IMR-90 (cell line): ENCODE measurements at regions of chr2 and their contacts with region 1.

Region 1: DNA sequence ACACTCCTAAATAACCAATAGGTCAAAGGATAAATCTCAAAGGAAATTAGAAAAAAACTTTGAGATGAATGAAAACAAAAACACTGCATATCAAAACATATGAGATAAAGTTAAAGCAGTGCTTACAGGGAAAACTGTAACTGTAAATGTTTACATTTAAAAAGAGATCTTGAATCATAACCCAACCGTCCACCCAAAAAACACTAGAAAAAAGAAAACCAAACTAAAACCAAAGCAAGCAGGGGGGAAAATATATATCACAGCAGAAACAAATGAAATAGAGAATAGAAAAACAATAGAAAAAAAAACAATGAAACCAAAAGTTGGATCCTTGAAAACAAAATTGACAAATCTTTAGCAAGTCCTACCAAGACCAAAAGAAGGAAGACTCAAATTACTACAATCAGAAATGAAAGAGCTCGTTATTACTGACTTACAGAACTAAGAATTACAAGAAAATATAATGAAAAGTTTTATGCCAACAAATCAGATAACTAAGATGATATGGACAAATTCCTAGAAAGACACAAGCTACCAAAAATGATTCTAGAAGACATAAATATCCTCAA is 65.6 kb downstream of the TLK1 start:
- DNase-seq: no peak
- ATAC-seq: peak; percentile 44; the same call in 1 of the 2 replicates
- H3K4me3 ChIP-seq: no peak overlapping the region
- H3K27ac ChIP-seq: no peak overlapping the region
- H3K4me1 ChIP-seq: no peaks in the 10 kb centered on the region
- H3K27me3 ChIP-seq: no peaks in the 10 kb centered on the region
- CTCF ChIP-seq: no peak
- POLR2A ChIP-seq: no peak
- RAD21 ChIP-seq: no peak

Region 2: GRCh38 chr2:171134624-171135230 is 39.6 kb after region 1 on chr2:
- CTCF ChIA-PET with region 1: no interaction called
- POLR2A ChIA-PET with region 1: no interaction called
- dilution Hi-C with region 1: no loop called
- in situ Hi-C with region 1: no loop called
- intact Hi-C with region 1: loop called (anchors 5 kb)
- DNase-seq: no peak
- ATAC-seq: no peak
- H3K4me3 ChIP-seq: no peak overlapping the region
- H3K27ac ChIP-seq: no peak overlapping the region
- H3K4me1 ChIP-seq: peaks cover 2% of the 10 kb centered on the region; the same call in 1 of the 2 replicates
- H3K27me3 ChIP-seq: no peaks in the 10 kb centered on the region
- CTCF ChIP-seq: no peak
- POLR2A ChIP-seq: no peak
- RAD21 ChIP-seq: no peak